CD4-positive, alpha-beta memory T cell (primary cell): ENCODE measurements at regions of chr1 and their contacts with region 1.

Region 1: DNA sequence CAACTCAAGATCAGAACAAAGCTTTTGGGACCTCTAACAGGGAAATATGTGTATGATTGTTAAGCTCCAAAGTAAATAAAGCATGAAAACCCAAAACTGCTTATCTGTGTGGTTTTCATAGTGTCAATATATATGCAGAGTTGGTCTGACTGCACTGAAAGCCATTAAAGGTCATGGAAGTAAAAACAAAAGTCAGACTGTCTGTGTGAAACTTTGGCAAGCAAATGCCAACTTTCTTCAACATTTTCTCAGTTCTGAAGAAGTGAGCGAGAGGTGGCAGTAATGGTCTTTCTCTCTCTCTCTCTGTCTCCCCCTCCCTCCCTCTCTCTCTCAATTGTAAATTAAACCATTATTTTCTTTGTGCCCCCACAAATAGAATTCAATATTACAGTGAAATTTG is 100.1 kb upstream of the S1PR1 start:
- DNase-seq: peak in 3 of 5 donors; percentile 26 to 40 (median 32)
- H3K4me3 ChIP-seq: no peak overlapping the region
- H3K4me3 Mint-ChIP-seq: peak overlapping the region in 5 of 8 donors; percentile 26 to 67 (median 37)
- H3K27ac ChIP-seq: no peak overlapping the region
- H3K27ac Mint-ChIP-seq: peak overlapping the region; percentile 42 to 92 (median 77)
- H3K4me1 ChIP-seq: peaks cover 36% of the 10 kb centered on the region
- H3K4me1 Mint-ChIP-seq: peaks cover 32 to 57% (median 41%) of the 10 kb centered on the region in 4 donors
- H3K27me3 ChIP-seq: no peaks in the 10 kb centered on the region
- H3K27me3 Mint-ChIP-seq: no peaks in the 10 kb centered on the region

Region 2: DNA sequence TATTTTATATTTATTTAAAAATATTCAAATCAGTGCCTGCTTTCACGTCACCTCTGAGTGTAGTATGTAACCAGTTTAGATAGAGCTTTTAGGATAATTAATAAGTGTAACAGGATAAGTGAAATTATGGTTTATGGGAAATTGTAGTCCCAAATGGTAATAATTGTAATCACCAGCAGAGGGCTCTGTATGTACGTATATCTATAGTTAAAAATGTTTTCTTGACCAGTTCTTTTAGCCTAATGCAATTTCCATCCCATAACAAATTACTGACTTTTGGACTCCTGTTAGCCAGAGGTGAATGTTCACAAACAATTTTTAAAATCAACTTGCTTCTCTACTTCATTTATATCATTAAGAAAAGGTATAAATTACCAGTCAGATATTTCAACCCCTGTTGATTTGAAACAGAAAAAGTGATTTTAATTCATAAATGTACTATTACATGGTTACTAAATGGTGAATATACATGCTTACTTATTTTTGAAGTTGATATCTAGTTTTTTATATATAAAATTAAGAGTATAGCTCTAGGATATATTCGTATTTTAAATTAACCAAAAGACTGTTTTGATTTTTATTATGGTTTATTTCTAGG is 215.5 kb before region 1 on chr1:
- CTCF ChIA-PET with region 1: no interaction called
- POLR2A ChIA-PET with region 1: interaction called, 3 read pairs
- intact Hi-C with region 1: loop called (anchors 1 kb)
- DNase-seq: peak in 4 of 5 donors; percentile 48 to 66 (median 60)
- H3K4me3 ChIP-seq: no peak overlapping the region
- H3K4me3 Mint-ChIP-seq: peak overlapping the region in 3 of 8 donors; percentile 24 to 67 (median 39)
- H3K27ac ChIP-seq: no peak overlapping the region
- H3K27ac Mint-ChIP-seq: peak overlapping the region; percentile 61 to 91 (median 82)
- H3K4me1 ChIP-seq: peaks cover 39% of the 10 kb centered on the region
- H3K4me1 Mint-ChIP-seq: peaks cover 25 to 61% (median 38%) of the 10 kb centered on the region in 4 donors
- H3K27me3 ChIP-seq: no peaks in the 10 kb centered on the region
- H3K27me3 Mint-ChIP-seq: no peaks in the 10 kb centered on the region